ENCODE measurements at regions of chr18 and their contacts with region 1.

Region 1: GRCh38 chr18:47150029-47150823 is at the start of gene HDHD2:
- DNase-seq: peak; percentile 58
- ATAC-seq: peak; percentile 91
- H3K4me3 ChIP-seq: peak within 1 kb of the TSS; percentile 79
- H3K27ac ChIP-seq: peak within 1 kb of the TSS; percentile 59
- H3K4me1 ChIP-seq: no peaks in the 10 kb centered on the region
- H3K27me3 ChIP-seq: no peaks in the 10 kb centered on the region
- CTCF ChIP-seq: no peak
- total RNA-seq, gene HDHD2: 6.3 TPM in 2 replicates

Region 2: GRCh38 chr18:47050468-47050867 is 99.8 kb before region 1 on chr18:
- CTCF ChIA-PET with region 1: no interaction called
- POLR2A ChIA-PET with region 1: no interaction called
- intact Hi-C with region 1: no loop called
- DNase-seq: peak; percentile 37
- ATAC-seq: no peak
- H3K4me3 ChIP-seq: no peak overlapping the region
- H3K27ac ChIP-seq: no peak overlapping the region
- H3K4me1 ChIP-seq: no peaks in the 10 kb centered on the region
- H3K27me3 ChIP-seq: no peaks in the 10 kb centered on the region
- CTCF ChIP-seq: peak; percentile 66; the same call in 1 of the 2 replicates

Region 3: GRCh38 chr18:47175908-47176575 is 25.8 kb after region 1 on chr18 and contains the start of gene IER3IP1:
- CTCF ChIA-PET with region 1: no interaction called
- POLR2A ChIA-PET with region 1: interaction called, 6 read pairs
- intact Hi-C with region 1: loop called (anchors 1 kb)
- DNase-seq: peak; percentile 77
- ATAC-seq: peak; percentile 90
- H3K4me3 ChIP-seq: peak within 1 kb of the TSS; percentile 82
- H3K27ac ChIP-seq: peak within 1 kb of the TSS; percentile 11; the same call in 1 of the 2 replicates
- H3K4me1 ChIP-seq: no peaks in the 10 kb centered on the region
- H3K27me3 ChIP-seq: no peaks in the 10 kb centered on the region
- CTCF ChIP-seq: no peak
- total RNA-seq, gene IER3IP1: 9.2 and 23.2 TPM in 2 replicates